Naive thymus-derived CD8-positive, alpha-beta T cell (primary cell): ENCODE measurements at regions of chr19 and their contacts with region 1.

Region 1: GRCh38 chr19:42396381-42397262 is 6.5 kb upstream of the CNFN start:
- DNase-seq: peak; percentile 71 to 94 (median 86)
- ATAC-seq: peak; percentile 81 to 91
- H3K4me3 Mint-ChIP-seq: peak overlapping the region; percentile 77 to 93 (median 89)
- H3K27ac Mint-ChIP-seq: peak overlapping the region; percentile 15 to 98 (median 92)
- H3K4me1 Mint-ChIP-seq: peaks cover 25 to 50% (median 44%) of the 10 kb centered on the region in 4 donors
- H3K27me3 Mint-ChIP-seq: peaks cover 0 to 5% (median 2%) of the 10 kb centered on the region in 5 donors

Region 2: GRCh38 chr19:42423462-42424344 is 27.1 kb after region 1 on chr19:
- POLR2A ChIA-PET with region 1: interaction called, 13 read pairs
- DNase-seq: peak; percentile 81 to 97 (median 92)
- ATAC-seq: peak; percentile 90 to 94
- H3K4me3 Mint-ChIP-seq: peak overlapping the region; percentile 94 to 100 (median 97)
- H3K27ac Mint-ChIP-seq: peak overlapping the region; percentile 89 to 96 (median 94)
- H3K4me1 Mint-ChIP-seq: peaks cover 35 to 50% (median 45%) of the 10 kb centered on the region in 4 donors
- H3K27me3 Mint-ChIP-seq: no peaks in the 10 kb centered on the region